Activated CD4-positive, alpha-beta memory T cell treated with anti-CD3 and anti-CD28 coated beads for 36 hours (primary cell): ENCODE measurements at regions of chr11 and their contacts with region 1.

Region 1: DNA sequence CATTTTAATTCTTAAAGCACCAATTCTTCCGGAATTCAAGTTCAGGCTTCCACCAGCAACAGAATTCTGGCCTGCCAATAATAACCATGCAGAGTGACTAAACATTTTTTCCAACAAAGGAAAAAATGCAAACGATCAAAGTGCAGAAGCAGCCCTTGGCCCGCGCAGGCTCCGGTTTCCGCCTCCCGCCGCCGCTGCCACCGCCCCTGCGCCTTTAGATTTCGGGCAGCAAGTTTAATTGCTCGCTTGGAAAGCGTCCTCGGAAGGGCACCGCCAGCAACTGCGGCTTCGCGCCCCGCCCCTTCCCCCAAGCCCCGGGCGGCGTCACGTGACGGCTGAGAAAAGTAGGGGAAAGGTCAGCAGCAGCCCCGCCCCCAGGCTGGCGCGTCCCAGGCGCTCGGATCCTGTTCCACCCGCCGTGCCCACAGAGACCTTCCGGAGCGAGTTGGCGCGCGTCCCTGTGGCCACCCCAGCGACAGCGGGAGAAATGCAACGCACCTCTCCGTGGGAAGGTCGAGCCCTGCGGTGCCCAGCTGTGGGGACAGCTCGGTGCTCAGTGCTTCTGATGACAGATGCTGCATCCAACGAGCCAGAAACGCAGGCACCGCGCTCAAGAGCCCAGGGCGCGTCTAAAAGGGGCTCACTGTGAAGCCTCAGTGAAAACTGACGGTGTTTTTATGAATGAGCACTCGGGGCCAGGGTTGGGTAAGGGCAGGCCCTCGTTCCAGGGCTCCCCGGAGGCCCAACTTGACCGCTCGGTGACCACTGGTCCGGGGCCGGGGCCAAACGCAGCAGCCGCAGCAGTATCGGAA is 2.5 kb downstream of the CPT1A start:
- DNase-seq: peak; percentile 97
- H3K4me3 Mint-ChIP-seq: peak overlapping the region; percentile 78
- H3K27ac Mint-ChIP-seq: peak overlapping the region; percentile 88
- H3K4me1 Mint-ChIP-seq: peaks cover 55% of the 10 kb centered on the region
- H3K27me3 Mint-ChIP-seq: no peaks in the 10 kb centered on the region

Region 2: DNA sequence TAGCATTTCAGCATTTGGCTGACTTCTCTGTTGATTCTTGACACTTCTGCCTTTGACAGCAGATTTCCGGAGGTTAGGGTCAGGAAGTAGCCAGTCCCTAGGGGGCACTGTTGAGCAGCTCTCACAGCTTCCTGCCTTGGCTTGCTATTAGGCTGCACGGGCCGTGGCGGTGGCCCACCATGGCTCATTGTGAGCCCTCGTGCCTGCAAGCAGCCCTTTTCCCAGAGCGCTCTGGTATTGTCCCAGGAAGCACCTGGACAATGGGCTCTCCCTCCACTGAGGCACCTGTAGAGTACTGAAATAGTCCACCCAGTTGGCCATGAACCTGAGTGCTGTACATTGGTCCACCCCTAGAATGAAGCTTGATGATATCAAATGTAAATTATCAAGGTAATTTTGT is 255.2 kb before region 1 on chr11:
- CTCF ChIA-PET with region 1: interaction called, 10 read pairs
- POLR2A ChIA-PET with region 1: no interaction called
- intact Hi-C with region 1: no loop called
- DNase-seq: peak; percentile 73
- H3K4me3 Mint-ChIP-seq: no peak overlapping the region
- H3K27ac Mint-ChIP-seq: no peak overlapping the region
- H3K4me1 Mint-ChIP-seq: peaks cover 19% of the 10 kb centered on the region
- H3K27me3 Mint-ChIP-seq: no peaks in the 10 kb centered on the region

Region 3: GRCh38 chr11:68751004-68751856 is 88.0 kb before region 1 on chr11 and contains the start of gene TESMIN:
- CTCF ChIA-PET with region 1: interaction called, 4 read pairs
- POLR2A ChIA-PET with region 1: no interaction called
- intact Hi-C with region 1: loop called (anchors 1 kb)
- DNase-seq: peak; percentile 96
- H3K4me3 Mint-ChIP-seq: peak within 1 kb of the TSS; percentile 64
- H3K27ac Mint-ChIP-seq: no peak within 1 kb of the TSS
- H3K4me1 Mint-ChIP-seq: peaks cover 12% of the 10 kb centered on the region
- H3K27me3 Mint-ChIP-seq: no peaks in the 10 kb centered on the region
- total RNA-seq, gene TESMIN: 6.6 to 7.3 TPM

Region 4: GRCh38 chr11:68816917-68817419 is 22.3 kb before region 1 on chr11:
- CTCF ChIA-PET with region 1: interaction called, 17 read pairs
- POLR2A ChIA-PET with region 1: no interaction called
- intact Hi-C with region 1: no loop called
- DNase-seq: peak; percentile 53
- H3K4me3 Mint-ChIP-seq: no peak overlapping the region
- H3K27ac Mint-ChIP-seq: peak overlapping the region; percentile 75
- H3K4me1 Mint-ChIP-seq: peaks cover 18% of the 10 kb centered on the region
- H3K27me3 Mint-ChIP-seq: no peaks in the 10 kb centered on the region

Region 5: DNA sequence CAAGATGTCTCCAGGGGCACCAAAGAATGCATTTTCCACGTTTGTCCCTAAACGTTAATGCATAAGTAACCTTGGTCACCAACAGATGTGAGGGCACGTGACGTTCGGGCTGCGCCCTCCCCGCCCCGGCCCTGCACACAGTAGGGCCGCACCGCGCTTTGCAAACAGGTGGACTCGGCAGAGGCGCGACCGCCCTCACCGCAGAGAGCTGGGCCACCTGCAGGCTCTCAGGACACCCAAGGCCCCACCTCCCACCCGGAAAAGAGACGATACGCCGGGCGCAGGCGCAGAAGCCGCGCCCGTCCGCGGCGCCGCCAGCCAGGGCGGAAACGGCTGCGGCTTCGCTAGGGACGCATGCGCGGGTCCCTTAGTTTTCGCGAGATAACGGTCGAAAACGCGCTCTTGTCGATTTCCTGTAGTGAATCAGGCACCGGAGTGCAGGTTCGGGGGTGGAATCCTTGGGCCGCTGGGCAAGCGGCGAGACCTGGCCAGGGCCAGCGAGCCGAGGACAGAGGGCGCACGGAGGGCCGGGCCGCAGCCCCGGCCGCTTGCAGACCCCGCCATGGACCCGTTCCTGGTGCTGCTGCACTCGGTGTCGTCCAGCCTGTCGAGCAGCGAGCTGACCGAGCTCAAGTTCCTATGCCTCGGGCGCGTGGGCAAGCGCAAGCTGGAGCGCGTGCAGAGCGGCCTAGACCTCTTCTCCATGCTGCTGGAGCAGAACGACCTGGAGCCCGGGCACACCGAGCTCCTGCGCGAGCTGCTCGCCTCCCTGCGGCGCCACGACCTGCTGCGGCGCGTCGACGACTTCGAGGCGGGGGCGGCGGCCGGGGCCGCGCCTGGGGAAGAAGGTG is 1363.9 kb after region 1 on chr11 and contains the start of gene FADD:
- CTCF ChIA-PET with region 1: no interaction called
- POLR2A ChIA-PET with region 1: no interaction called
- intact Hi-C with region 1: loop called (anchors 10 kb)
- DNase-seq: peak; percentile 95
- H3K4me3 Mint-ChIP-seq: peak within 1 kb of the TSS; percentile 96
- H3K27ac Mint-ChIP-seq: peak within 1 kb of the TSS; percentile 99
- H3K4me1 Mint-ChIP-seq: peaks cover 37% of the 10 kb centered on the region
- H3K27me3 Mint-ChIP-seq: peaks cover 2% of the 10 kb centered on the region
- total RNA-seq, gene FADD: 31.8 to 33.9 TPM